ENCODE measurements at regions of chr7 and their contacts with region 1.

Region 1: GRCh38 chr7:7702826-7703225 is 15.6 kb downstream of the RPA3 start:
- DNase-seq: no peak
- ATAC-seq: peak; percentile 44

Region 2: DNA sequence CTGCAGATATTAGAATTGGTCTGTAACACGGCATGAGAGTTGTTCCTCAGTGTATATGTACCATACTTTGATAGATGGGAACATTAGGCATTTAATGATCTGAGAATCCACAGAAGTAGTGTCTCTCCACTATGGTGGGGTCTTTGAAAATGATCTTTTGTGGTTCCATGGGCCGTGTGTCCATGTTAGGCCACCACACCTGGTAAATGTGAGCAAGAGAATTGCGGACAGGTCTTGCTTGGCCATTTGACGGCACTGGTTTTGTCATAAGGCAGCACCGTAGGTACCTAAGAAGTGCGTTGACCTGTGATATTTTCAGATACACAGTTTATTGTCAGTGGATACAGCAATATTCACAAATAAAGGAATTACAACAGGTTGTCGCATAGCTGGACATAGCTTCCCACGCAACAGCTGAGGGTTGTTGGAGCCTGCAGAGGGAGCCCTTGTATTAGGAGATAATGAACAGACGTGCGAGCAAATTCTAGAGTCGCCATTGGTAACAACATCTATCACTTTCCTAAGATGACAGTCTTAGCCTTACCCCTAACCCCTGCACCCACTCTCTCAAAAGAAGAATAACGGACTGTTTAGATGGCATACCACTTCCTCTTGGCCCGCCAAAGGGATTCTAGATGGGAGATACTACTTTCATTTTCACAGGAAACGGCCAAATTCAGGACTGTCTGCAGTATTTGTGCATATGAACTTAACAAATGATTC is 278.5 kb before region 1 on chr7:
- intact Hi-C with region 1: no loop called
- DNase-seq: peak; percentile 39 to 72
- ATAC-seq: peak; percentile 98

Region 3: DNA sequence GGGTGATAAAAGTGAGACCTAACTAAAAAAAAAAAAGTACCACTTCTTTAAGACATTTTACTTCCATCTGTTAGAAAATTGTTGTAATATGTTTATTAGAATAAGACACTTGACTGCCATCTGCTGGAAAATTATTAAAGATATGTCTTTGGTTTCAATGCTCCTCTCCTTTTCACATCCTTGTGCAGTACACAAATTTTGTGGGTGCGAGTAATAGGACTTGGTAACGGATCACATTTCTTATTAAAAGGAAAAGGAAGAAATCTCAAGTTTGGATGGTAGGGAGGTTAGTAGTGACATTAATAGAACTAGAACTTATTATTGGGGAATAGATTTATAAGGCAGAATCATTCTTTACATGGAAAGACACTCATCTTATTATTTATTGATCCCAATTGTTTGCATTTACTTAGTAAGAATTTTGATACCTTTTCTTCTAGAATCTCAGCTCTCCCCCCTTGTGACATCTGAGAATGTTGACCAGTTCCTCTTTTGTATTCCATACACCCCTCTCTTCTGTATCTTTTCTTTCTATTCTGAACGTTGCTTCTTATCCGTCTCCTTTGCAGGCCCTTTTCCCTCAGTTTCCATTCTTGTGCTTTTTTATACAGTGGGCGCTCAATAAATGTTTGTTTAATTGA is 58.6 kb after region 1 on chr7:
- intact Hi-C with region 1: loop called in 1 of 2 experiments (anchors 2 kb)
- DNase-seq: no peak
- ATAC-seq: peak; percentile 48